Motor neuron (in vitro differentiated cells): ENCODE measurements at regions of chr10 and their contacts with region 1.

Region 1: GRCh38 chr10:123967396-123968243 is 76.0 kb upstream of the CPXM2 start:
- ATAC-seq: peak; percentile 54 to 95 (median 76)
- H3K4me3 ChIP-seq: no peak overlapping the region
- H3K27ac ChIP-seq: no peak overlapping the region
- H3K4me1 ChIP-seq: peaks cover 0 to 5% of the 10 kb centered on the region in 2 donors

Region 2: GRCh38 chr10:123236122-123236521 is 731.5 kb before region 1 on chr10:
- in situ Hi-C with region 1: no loop called
- ATAC-seq: no peak
- H3K4me3 ChIP-seq: no peak overlapping the region
- H3K27ac ChIP-seq: no peak overlapping the region
- H3K4me1 ChIP-seq: no peaks in the 10 kb centered on the region

Region 3: GRCh38 chr10:123582084-123582989 is 385.3 kb before region 1 on chr10:
- in situ Hi-C with region 1: loop called (anchors 5 to 10 kb)
- ATAC-seq: peak; percentile 57 to 85 (median 76)
- H3K4me3 ChIP-seq: no peak overlapping the region
- H3K27ac ChIP-seq: no peak overlapping the region
- H3K4me1 ChIP-seq: no peaks in the 10 kb centered on the region